Ascending aorta (tissue), 2 donors: ENCODE measurements at regions of chr3 and their contacts with region 1.

Region 1: GRCh38 chr3:158659454-158660237 is 12.8 kb downstream of the LXN start:
- DNase-seq: peak in 1 of 2 donors; percentile 71
- H3K4me3 ChIP-seq: no peak overlapping the region
- H3K27ac ChIP-seq: no peak overlapping the region
- H3K4me1 ChIP-seq: no peaks in the 10 kb centered on the region
- H3K27me3 ChIP-seq: no peaks in the 10 kb centered on the region
- CTCF ChIP-seq: peak; percentile 42 to 61 (median 55)

Region 2: GRCh38 chr3:158602227-158602626 is 57.4 kb before region 1 on chr3:
- intact Hi-C with region 1: no loop called
- DNase-seq: no peak
- H3K4me3 ChIP-seq: no peak overlapping the region
- H3K27ac ChIP-seq: no peak overlapping the region
- H3K4me1 ChIP-seq: no peaks in the 10 kb centered on the region
- H3K27me3 ChIP-seq: no peaks in the 10 kb centered on the region
- CTCF ChIP-seq: no peak

Region 3: DNA sequence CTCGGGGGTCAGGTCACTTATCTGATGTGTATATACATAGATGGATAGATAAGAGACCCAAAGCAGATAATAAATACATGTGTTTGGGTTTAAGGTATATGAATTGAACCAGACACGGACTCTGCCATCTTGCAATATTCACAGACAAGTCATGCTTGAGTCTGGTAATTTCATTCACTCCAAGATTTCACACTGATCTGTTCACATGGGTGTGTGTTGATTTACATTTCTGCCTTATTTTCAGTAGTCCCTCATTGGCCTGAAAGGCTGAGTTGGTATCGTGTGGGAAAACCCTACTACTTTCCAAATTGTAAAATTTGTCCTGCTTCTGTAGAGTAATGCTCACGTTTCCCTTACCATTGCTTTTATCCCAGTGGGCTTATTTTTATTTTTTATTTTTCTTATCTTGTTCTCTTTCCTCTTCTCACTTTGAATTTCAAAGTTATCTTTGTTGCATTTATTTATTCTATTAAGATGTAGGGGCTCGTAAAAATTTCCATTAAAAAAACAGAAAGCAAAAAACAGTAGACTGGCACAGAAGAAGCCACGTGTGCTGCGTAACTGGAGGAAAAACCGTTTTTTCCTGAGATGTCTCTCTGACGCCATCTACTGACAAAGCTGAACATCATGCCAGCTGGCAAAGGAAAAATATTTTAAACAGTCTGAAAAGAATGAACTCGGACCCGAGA is 131.4 kb after region 1 on chr3:
- intact Hi-C with region 1: loop called (anchors 1 kb)
- DNase-seq: no peak
- H3K4me3 ChIP-seq: peak overlapping the region; percentile 15 to 42
- H3K27ac ChIP-seq: no peak overlapping the region
- H3K4me1 ChIP-seq: no peaks in the 10 kb centered on the region
- H3K27me3 ChIP-seq: no peaks in the 10 kb centered on the region
- CTCF ChIP-seq: peak; percentile 67 to 87 (median 78)